ENCODE measurements at regions of chr5 and their contacts with region 1.

Region 1: DNA sequence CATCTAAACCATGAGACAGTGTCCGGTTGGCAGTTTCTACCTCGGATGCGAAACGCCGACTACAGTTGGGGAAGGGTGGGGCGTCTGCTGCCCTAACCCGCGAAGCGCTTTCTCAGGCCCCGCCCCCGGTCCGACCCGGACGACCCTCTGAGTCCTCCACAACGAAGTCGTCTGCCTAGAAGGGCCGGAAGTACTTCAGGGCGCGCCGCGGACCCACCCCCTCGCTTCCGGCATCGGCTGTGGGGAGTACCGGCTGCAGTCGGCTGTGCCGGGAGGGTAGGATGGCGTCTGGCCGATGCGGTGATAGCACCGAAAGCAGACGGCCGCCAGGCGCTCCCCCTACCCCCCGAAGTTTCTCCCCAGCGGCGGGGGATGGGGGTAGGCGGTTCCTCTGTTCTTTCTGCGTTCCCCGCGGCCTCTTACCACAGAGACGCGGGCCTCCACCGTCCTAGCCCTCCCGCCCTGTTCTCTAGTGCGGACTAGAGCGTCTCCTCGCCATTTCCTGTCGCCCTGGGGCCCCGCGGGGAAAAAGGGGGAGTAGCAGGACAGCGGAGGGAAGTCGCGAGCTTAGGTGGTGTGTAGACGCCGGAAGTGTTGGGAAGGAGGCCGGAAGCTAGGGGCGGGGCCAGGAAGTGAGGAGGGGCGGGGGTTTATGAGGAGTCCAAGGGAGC is at the start of gene TRIM41:
- DNase-seq: peak; percentile 96
- ATAC-seq: peak; percentile 63
- H3K4me3 Mint-ChIP-seq: peak within 1 kb of the TSS; percentile 87
- H3K27ac Mint-ChIP-seq: peak within 1 kb of the TSS; percentile 99
- H3K4me1 Mint-ChIP-seq: peaks cover 51% of the 10 kb centered on the region
- H3K27me3 Mint-ChIP-seq: peaks cover 3% of the 10 kb centered on the region
- total RNA-seq, gene TRIM41: 44.5 to 49.7 TPM

Region 2: GRCh38 chr5:181184857-181185251 is 38.3 kb before region 1 on chr5:
- POLR2A ChIA-PET with region 1: interaction called, 57 read pairs
- DNase-seq: no peak
- ATAC-seq: no peak
- H3K4me3 Mint-ChIP-seq: peak overlapping the region; percentile 98
- H3K27ac Mint-ChIP-seq: peak overlapping the region; percentile 99
- H3K4me1 Mint-ChIP-seq: peaks cover 30% of the 10 kb centered on the region
- H3K27me3 Mint-ChIP-seq: peaks cover 4% of the 10 kb centered on the region

Region 3: GRCh38 chr5:181207214-181208107 is 15.7 kb before region 1 on chr5:
- POLR2A ChIA-PET with region 1: interaction called, 52 read pairs
- DNase-seq: peak; percentile 77
- ATAC-seq: peak; percentile 58
- H3K4me3 Mint-ChIP-seq: peak overlapping the region; percentile 86
- H3K27ac Mint-ChIP-seq: peak overlapping the region; percentile 87
- H3K4me1 Mint-ChIP-seq: peaks cover 29% of the 10 kb centered on the region
- H3K27me3 Mint-ChIP-seq: peaks cover 27% of the 10 kb centered on the region

Region 4: GRCh38 chr5:181243512-181244343 is 20.5 kb after region 1 on chr5 and contains the start of gene RACK1:
- POLR2A ChIA-PET with region 1: interaction called, 98 read pairs
- DNase-seq: peak; percentile 84
- ATAC-seq: peak; percentile 68
- H3K4me3 Mint-ChIP-seq: peak within 1 kb of the TSS; percentile 95
- H3K27ac Mint-ChIP-seq: peak within 1 kb of the TSS; percentile 92
- H3K4me1 Mint-ChIP-seq: peaks cover 39% of the 10 kb centered on the region
- H3K27me3 Mint-ChIP-seq: no peaks in the 10 kb centered on the region
- total RNA-seq, gene RACK1: 1,741 to 1,808 TPM

Measured in activated naive CD8-positive, alpha-beta T cell treated with anti-CD3 and anti-CD28 coated beads, Interleukin-2, amount 10 ng/mL, durations not matched to agents 7 days and 5 days (primary cell).